GM12878 (cell line): ENCODE measurements at regions of chr18 and their contacts with region 1.

Region 1: GRCh38 chr18:58535340-58536201 is 93.3 kb downstream of the ALPK2 start:
- DNase-seq: peak; percentile 99
- ATAC-seq: peak; percentile 42
- H3K4me3 ChIP-seq: peak overlapping the region; percentile 77
- H3K27ac ChIP-seq: peak overlapping the region; percentile 100
- H3K4me1 ChIP-seq: peaks cover 22% of the 10 kb centered on the region
- H3K27me3 ChIP-seq: no peaks in the 10 kb centered on the region
- CTCF ChIP-seq: no peak
- EP300 ChIP-seq: peak; percentile 97 to 98; a peak in 3 of 4 replicates
- POLR2A ChIP-seq: peak; percentile 66
- RAD21 ChIP-seq: no peak

Region 2: GRCh38 chr18:57797209-57797651 is 738.3 kb before region 1 on chr18:
- CTCF ChIA-PET with region 1: no interaction called
- POLR2A ChIA-PET with region 1: no interaction called
- RAD21 ChIA-PET with region 1: no interaction called
- SMC1A ChIA-PET with region 1: no interaction called
- in situ Hi-C with region 1: no loop called
- intact Hi-C with region 1: no loop called
- DNase-seq: no peak
- ATAC-seq: no peak
- H3K4me3 ChIP-seq: no peak overlapping the region
- H3K27ac ChIP-seq: no peak overlapping the region
- H3K4me1 ChIP-seq: no peaks in the 10 kb centered on the region
- H3K27me3 ChIP-seq: peaks cover 6 to 11% of the 10 kb centered on the region in 2 experiments
- CTCF ChIP-seq: no peak
- EP300 ChIP-seq: no peak
- POLR2A ChIP-seq: no peak
- RAD21 ChIP-seq: no peak

Region 3: DNA sequence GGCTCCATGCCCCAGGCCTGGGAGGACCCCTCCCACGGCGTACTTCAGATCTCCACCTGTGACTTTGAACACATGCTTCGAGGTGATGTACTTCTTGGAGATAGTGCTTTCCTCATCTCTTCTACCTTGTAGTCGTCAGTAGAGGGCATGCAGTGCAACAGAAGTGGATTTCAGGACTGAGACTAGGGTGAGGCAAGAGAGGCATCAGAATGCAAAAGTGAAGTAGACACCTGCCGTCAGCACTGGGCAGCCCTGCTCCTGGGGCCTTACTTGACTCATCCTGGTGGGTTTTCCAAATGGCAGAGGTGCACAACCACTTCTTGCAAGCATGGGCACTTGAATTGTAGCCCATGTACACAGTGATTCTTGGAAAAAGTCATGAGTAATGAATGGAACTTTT is 232.8 kb before region 1 on chr18:
- CTCF ChIA-PET with region 1: no interaction called
- POLR2A ChIA-PET with region 1: no interaction called
- RAD21 ChIA-PET with region 1: no interaction called
- SMC1A ChIA-PET with region 1: no interaction called
- in situ Hi-C with region 1: no loop called
- intact Hi-C with region 1: no loop called
- DNase-seq: no peak
- ATAC-seq: peak; percentile 55
- H3K4me3 ChIP-seq: no peak overlapping the region
- H3K27ac ChIP-seq: no peak overlapping the region
- H3K4me1 ChIP-seq: peaks cover 13% of the 10 kb centered on the region
- H3K27me3 ChIP-seq: no peaks in the 10 kb centered on the region
- CTCF ChIP-seq: no peak; a peak in 1 of 6 replicates
- EP300 ChIP-seq: no peak
- POLR2A ChIP-seq: no peak
- RAD21 ChIP-seq: peak; percentile 34; the same call in 1 of the 2 replicates

Region 4: GRCh38 chr18:58552057-58552461 is 16.5 kb after region 1 on chr18:
- CTCF ChIA-PET with region 1: interaction called, 10 read pairs
- POLR2A ChIA-PET with region 1: interaction called, 76 read pairs
- RAD21 ChIA-PET with region 1: interaction called, 121 read pairs
- SMC1A ChIA-PET with region 1: interaction called, 578 read pairs
- in situ Hi-C with region 1: no loop called
- intact Hi-C with region 1: no loop called
- DNase-seq: peak; percentile 82
- ATAC-seq: peak; percentile 78
- H3K4me3 ChIP-seq: no peak overlapping the region
- H3K27ac ChIP-seq: peak overlapping the region; percentile 80
- H3K4me1 ChIP-seq: peaks cover 37% of the 10 kb centered on the region
- H3K27me3 ChIP-seq: no peaks in the 10 kb centered on the region
- CTCF ChIP-seq: no peak
- EP300 ChIP-seq: peak; percentile 97
- POLR2A ChIP-seq: no peak
- RAD21 ChIP-seq: peak; percentile 25; the same call in 1 of the 2 replicates

Region 5: DNA sequence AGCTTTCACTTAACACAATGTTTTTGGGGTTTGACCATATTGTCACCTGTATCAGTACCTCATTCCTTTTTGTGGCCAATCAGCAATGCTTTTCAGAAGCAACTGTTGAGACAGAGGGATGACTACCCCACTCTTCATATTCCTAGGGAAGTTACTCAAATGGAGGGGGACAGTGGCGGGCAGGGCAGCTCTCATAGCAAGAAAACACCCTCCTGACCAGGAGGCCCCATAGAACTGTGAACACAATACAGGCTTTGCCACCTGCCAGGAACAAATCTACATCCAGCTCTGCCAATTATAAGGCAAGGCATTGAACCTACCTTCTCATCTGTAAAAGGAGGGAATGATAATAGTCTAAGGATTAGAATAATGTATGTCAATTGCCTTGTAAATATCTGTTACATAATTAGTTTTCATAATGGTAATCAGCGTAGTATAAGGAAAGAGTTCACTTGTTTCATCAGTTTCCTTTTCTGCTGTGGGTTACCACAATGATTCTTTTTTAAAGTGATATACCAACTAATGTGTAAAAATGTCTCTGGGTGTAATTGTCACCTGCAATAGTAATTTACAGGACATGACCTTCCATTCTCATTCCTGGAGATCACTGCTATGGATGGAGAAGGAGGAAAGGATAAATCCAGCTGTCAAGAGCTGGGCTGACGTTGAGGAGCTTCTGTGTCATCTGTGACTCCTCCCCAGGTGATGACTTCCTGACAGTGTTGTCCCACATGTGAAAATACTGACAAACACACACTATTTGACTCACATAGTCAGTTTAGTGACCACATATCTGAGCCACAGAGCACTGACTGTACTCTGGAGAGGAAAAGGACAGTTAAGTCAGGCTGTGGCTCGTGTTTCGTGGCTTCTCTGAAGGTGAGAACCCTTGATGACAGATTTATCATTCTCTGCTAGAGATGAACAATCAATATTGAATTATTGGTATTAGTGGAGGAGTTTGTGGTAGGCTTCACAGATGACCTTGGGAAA is 79.9 kb after region 1 on chr18:
- CTCF ChIA-PET with region 1: interaction called, 3 read pairs
- POLR2A ChIA-PET with region 1: interaction called, 6 read pairs
- RAD21 ChIA-PET with region 1: interaction called, 10 read pairs
- SMC1A ChIA-PET with region 1: interaction called, 19 read pairs
- in situ Hi-C with region 1: no loop called
- intact Hi-C with region 1: loop called (anchors 1 kb)
- DNase-seq: peak; percentile 88
- ATAC-seq: peak; percentile 92
- H3K4me3 ChIP-seq: no peak overlapping the region; the same call in 1 of the 2 replicates
- H3K27ac ChIP-seq: peak overlapping the region; percentile 70
- H3K4me1 ChIP-seq: peaks cover 22% of the 10 kb centered on the region
- H3K27me3 ChIP-seq: no peaks in the 10 kb centered on the region
- CTCF ChIP-seq: no peak
- EP300 ChIP-seq: peak; percentile 54 to 74; a peak in 3 of 4 replicates
- POLR2A ChIP-seq: no peak
- RAD21 ChIP-seq: peak; percentile 21; the same call in 1 of the 2 replicates

Region 6: GRCh38 chr18:58661423-58661822 is 125.9 kb after region 1 on chr18:
- CTCF ChIA-PET with region 1: interaction called, 58 read pairs
- POLR2A ChIA-PET with region 1: interaction called, 54 read pairs
- RAD21 ChIA-PET with region 1: interaction called, 171 read pairs
- SMC1A ChIA-PET with region 1: interaction called, 682 read pairs
- in situ Hi-C with region 1: loop called (anchors 5 kb)
- intact Hi-C with region 1: loop called (anchors 1 kb)
- DNase-seq: no peak
- ATAC-seq: no peak
- H3K4me3 ChIP-seq: peak overlapping the region; percentile 28; the same call in 1 of the 2 replicates
- H3K27ac ChIP-seq: peak overlapping the region; percentile 45; the same call in 1 of the 2 replicates
- H3K4me1 ChIP-seq: peaks cover 36% of the 10 kb centered on the region
- H3K27me3 ChIP-seq: no peaks in the 10 kb centered on the region
- CTCF ChIP-seq: peak; percentile 4 to 36 (median 20); a peak in 4 of 6 replicates
- EP300 ChIP-seq: no peak
- POLR2A ChIP-seq: no peak
- RAD21 ChIP-seq: peak; percentile 25; the same call in 1 of the 2 replicates

Region 7: GRCh38 chr18:58676270-58676669 is 140.7 kb after region 1 on chr18:
- CTCF ChIA-PET with region 1: interaction called, 32 read pairs
- POLR2A ChIA-PET with region 1: interaction called, 40 read pairs
- RAD21 ChIA-PET with region 1: interaction called, 113 read pairs
- SMC1A ChIA-PET with region 1: interaction called, 682 read pairs
- in situ Hi-C with region 1: no loop called
- intact Hi-C with region 1: loop called (anchors 2 kb)
- DNase-seq: no peak
- ATAC-seq: peak; percentile 27
- H3K4me3 ChIP-seq: peak overlapping the region; percentile 95
- H3K27ac ChIP-seq: no peak overlapping the region
- H3K4me1 ChIP-seq: peaks cover 3% of the 10 kb centered on the region; the same call in 1 of the 2 replicates
- H3K27me3 ChIP-seq: no peaks in the 10 kb centered on the region
- CTCF ChIP-seq: no peak
- EP300 ChIP-seq: no peak
- POLR2A ChIP-seq: no peak
- RAD21 ChIP-seq: no peak